ENCODE measurements at regions of chr16 and their contacts with region 1.

Region 1: GRCh38 chr16:53054670-53055485 is at the start of gene CHD9:
- DNase-seq: peak; percentile 55
- H3K4me3 ChIP-seq: peak within 1 kb of the TSS; percentile 87
- H3K27ac ChIP-seq: peak within 1 kb of the TSS; percentile 89
- H3K27me3 ChIP-seq: no peaks in the 10 kb centered on the region
- CTCF ChIP-seq: peak; percentile 98
- polyA plus RNA-seq, gene CHD9: 27.9 and 42.6 TPM in 2 replicates

Region 2: DNA sequence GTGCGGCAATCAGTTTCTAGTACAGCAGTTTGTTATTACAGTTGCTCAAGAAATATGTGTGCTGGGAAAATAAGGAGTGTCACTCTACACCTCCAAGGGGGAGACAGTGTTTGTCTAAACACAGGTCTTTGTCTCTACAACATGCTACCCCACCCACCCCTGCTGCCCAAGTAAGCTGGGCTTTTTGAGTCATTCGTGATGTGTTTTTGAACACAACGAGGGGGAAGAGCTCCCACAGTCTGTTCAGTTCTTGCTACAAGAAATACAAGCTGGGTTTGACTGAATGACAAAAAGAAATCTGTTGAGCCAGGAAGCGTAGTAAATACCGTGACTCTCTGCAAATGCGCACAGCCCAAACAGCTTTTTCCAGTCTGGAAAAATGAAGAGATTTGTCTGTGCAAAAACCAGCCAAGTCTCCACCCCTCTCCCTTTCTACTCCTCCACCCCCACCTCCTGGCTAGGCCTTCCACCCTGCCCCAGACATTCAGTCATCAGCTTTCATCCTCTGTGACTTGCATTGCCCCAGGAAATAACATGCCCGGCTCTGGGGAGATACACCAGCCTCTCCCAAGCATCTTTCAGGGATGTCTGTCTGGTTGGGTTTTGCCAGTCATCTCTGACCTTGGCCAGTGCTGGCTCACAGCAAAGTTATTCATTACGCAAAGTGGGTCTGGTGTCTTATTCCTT is 25.6 kb after region 1 on chr16:
- CTCF ChIA-PET with region 1: interaction called, 11 read pairs
- POLR2A ChIA-PET with region 1: interaction called, 4 read pairs
- DNase-seq: peak; percentile 65
- H3K4me3 ChIP-seq: peak overlapping the region; percentile 31
- H3K27ac ChIP-seq: peak overlapping the region; percentile 95
- H3K27me3 ChIP-seq: no peaks in the 10 kb centered on the region
- CTCF ChIP-seq: no peak

Region 3: GRCh38 chr16:53091466-53092211 is 36.8 kb after region 1 on chr16:
- CTCF ChIA-PET with region 1: interaction called, 10 read pairs
- POLR2A ChIA-PET with region 1: interaction called, 4 read pairs
- DNase-seq: peak; percentile 71
- H3K4me3 ChIP-seq: peak overlapping the region; percentile 26
- H3K27ac ChIP-seq: peak overlapping the region; percentile 95
- H3K27me3 ChIP-seq: no peaks in the 10 kb centered on the region
- CTCF ChIP-seq: no peak

Region 4: GRCh38 chr16:53130159-53131049 is 75.5 kb after region 1 on chr16:
- CTCF ChIA-PET with region 1: interaction called, 20 read pairs
- POLR2A ChIA-PET with region 1: interaction called, 13 read pairs
- DNase-seq: peak; percentile 87
- H3K4me3 ChIP-seq: peak overlapping the region; percentile 68
- H3K27ac ChIP-seq: peak overlapping the region; percentile 96
- H3K27me3 ChIP-seq: no peaks in the 10 kb centered on the region
- CTCF ChIP-seq: peak; percentile 53

Region 5: DNA sequence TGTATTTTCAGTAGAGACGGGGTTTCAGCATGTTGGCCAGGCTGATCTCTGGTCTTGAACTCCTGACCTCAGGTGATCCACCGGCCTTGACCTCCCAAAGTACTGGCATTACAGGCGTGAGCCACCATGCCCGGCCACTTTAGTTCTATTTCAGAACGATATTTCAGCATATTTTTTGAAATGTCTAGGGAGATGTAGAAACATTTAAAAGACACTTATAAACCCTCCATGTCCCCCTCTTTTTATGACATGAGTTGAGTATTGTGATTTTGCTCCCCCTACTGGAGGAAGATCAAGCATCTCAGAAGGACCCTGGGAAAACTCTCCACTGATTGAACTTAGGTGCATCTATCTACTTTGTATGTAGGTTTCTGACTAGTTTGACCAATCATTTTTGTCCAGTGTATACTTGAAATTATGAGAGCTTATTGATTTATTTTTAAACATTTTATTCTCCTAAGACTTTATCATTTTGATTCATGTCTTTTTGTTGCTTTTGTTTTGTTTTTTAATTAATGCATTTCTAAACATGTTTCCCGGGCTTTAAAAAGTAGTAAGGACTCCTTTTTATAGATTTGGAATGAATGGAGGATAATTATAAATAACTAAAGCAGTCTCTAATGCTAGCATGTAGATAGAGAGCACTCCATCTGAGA is 105.0 kb after region 1 on chr16:
- CTCF ChIA-PET with region 1: interaction called, 36 read pairs
- POLR2A ChIA-PET with region 1: interaction called, 4 read pairs
- DNase-seq: peak; percentile 18
- H3K4me3 ChIP-seq: no peak overlapping the region
- H3K27ac ChIP-seq: no peak overlapping the region
- H3K27me3 ChIP-seq: no peaks in the 10 kb centered on the region
- CTCF ChIP-seq: peak; percentile 78

Region 6: DNA sequence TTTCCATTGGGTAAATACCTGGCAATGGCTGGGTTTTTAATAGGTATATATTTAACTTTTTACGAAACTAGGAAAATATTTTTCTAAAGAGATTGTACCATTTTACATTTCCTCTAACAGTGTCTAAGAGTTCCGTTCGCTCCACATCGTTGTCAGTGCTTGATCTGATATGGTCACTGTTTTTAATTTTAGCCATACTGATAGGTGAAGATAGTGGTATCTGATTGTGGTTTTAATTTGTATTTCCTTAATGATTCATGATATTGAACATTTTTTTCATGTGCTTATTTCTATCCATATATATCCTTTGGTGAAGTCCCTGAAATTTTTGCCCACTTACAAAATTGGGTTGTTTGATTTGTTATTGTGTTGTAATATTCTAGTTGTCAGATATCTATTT is 117.6 kb after region 1 on chr16:
- CTCF ChIA-PET with region 1: no interaction called
- POLR2A ChIA-PET with region 1: no interaction called
- DNase-seq: no peak
- H3K4me3 ChIP-seq: no peak overlapping the region
- H3K27ac ChIP-seq: no peak overlapping the region
- H3K27me3 ChIP-seq: no peaks in the 10 kb centered on the region
- CTCF ChIP-seq: no peak

Region 7: GRCh38 chr16:53207810-53208752 is 153.2 kb after region 1 on chr16:
- CTCF ChIA-PET with region 1: interaction called, 35 read pairs
- POLR2A ChIA-PET with region 1: interaction called, 4 read pairs
- DNase-seq: peak; percentile 46
- H3K4me3 ChIP-seq: peak overlapping the region; percentile 70
- H3K27ac ChIP-seq: peak overlapping the region; percentile 82
- H3K27me3 ChIP-seq: no peaks in the 10 kb centered on the region
- CTCF ChIP-seq: peak; percentile 71

Region 8: GRCh38 chr16:53282975-53283946 is 228.4 kb after region 1 on chr16:
- CTCF ChIA-PET with region 1: interaction called, 10 read pairs
- POLR2A ChIA-PET with region 1: no interaction called
- DNase-seq: peak; percentile 4
- H3K4me3 ChIP-seq: no peak overlapping the region
- H3K27ac ChIP-seq: no peak overlapping the region
- H3K27me3 ChIP-seq: no peaks in the 10 kb centered on the region
- CTCF ChIP-seq: peak; percentile 59